ENCODE measurements at regions of chr2 and their contacts with region 1.

Region 1: GRCh38 chr2:220687231-220687843 is 884.8 kb downstream of the EPHA4 start:
- DNase-seq: peak; percentile 67
- ATAC-seq: peak; percentile 90 to 91

Region 2: GRCh38 chr2:219997341-219997851 is 689.9 kb before region 1 on chr2:
- intact Hi-C with region 1: loop called in 1 of 2 experiments (anchors 10 kb)
- DNase-seq: peak; percentile 72
- ATAC-seq: peak; percentile 76 to 88

Region 3: DNA sequence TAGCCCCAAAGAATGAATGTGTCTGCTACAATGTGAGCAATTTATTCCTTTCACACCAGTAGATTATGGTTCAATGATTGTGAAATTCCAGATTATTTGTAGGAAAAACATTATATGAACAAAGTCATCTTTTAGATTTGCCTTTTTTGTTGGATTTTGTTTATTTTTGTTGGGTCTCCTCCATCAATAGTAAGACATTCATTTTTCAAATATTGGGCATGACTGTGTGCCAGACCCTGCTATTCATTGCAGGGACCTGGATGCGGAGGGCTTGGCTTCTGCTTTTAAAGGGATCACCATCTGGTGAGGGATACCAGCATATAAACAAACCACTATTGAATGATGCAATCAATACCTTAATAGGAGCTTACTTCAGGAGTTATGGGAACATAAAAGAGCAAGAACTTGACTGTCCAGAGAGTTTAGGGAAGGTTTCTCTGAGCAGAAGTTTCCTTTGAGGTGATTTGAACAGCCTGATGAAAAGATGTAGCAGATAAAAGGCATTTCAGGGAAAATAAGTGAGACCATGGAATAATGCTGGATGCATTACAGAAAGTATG is 398.1 kb after region 1 on chr2:
- intact Hi-C with region 1: loop called in 1 of 2 experiments (anchors 10 kb)
- DNase-seq: no peak
- ATAC-seq: no peak